PC-9 (cell line): ENCODE measurements at regions of chr2 and their contacts with region 1.

Region 1: DNA sequence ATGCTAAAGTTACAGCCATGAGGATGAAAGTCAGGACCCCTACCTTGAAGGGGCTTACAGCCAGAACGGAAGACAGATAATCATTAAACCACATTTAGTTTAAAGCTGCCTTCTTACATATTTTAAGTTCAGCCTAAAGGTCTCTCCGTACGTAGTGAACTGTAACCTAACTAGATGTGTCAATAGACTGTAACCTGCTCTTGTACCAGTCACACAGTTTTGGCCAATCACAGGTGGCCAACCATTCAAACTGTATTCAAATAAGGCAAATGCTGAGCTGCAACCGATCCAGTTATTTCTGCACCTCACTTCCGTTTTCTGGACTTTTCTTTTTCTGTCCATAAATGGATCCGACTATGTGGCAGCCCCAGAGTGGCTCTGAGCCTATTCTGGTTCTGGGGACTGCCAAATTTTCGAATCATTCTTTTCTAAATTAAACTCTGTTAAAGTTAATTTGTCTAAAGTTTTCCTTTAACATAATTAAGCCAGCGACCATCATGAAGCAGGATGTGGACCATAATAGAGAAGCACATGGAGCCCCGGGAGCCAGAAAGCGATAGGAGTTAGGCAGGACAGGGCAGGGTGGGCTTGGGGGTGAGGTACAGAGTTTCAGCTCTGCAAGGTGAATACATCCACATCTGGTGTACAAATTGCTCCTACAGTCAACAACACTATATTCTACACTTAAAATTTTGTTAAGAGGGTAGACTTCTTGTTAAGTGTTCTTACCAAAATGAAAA is 48.4 kb upstream of the YPEL5 start:
- DNase-seq: no peak
- H3K4me3 ChIP-seq: no peak overlapping the region
- H3K27ac ChIP-seq: no peak overlapping the region
- H3K4me1 ChIP-seq: no peaks in the 10 kb centered on the region
- H3K27me3 ChIP-seq: peaks cover 70% of the 10 kb centered on the region
- CTCF ChIP-seq: no peak

Region 2: GRCh38 chr2:29519338-29519925 is 579.0 kb before region 1 on chr2:
- CTCF ChIA-PET with region 1: no interaction called
- POLR2A ChIA-PET with region 1: no interaction called
- intact Hi-C with region 1: no loop called
- DNase-seq: no peak
- H3K4me3 ChIP-seq: no peak overlapping the region
- H3K27ac ChIP-seq: no peak overlapping the region
- H3K4me1 ChIP-seq: no peaks in the 10 kb centered on the region
- H3K27me3 ChIP-seq: peaks cover 63% of the 10 kb centered on the region
- CTCF ChIP-seq: no peak

Region 3: DNA sequence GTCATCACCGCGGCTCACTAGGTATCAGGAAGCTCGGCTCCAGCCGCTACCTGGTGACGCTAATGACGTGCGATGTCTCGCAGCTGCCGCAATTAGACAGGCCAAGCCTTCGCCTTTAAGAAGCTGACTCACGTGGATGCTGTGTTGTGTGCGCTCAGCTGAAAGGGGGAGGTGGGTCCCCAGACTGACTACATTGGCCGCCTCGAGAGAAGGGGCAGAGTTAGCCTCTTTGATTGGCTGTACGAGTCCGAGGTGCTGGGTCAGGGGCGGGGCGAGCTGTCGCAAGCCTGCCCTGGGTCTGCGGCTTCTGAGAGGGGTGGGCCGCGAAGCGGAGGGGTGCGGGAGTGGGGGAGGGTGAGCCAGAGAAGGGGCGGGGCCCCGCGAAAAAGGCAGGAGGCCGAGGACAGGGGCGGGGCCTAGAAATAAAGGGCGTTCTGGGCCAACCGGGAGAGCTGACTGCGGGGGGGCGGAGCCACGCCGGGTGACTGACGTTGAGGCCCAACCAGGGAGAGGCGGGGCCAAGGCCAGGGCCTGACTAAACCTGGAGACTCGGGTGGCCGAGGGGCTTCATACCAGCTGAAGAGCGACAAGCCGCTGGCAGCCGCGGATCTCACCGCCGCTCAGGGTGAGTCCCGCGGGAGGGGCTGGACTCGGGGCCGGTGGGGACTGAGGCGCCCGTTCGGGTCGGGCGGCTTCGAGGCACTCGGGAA is 48.2 kb after region 1 on chr2 and contains the start of gene YPEL5:
- CTCF ChIA-PET with region 1: no interaction called
- POLR2A ChIA-PET with region 1: no interaction called
- intact Hi-C with region 1: loop called (anchors 5 kb)
- DNase-seq: peak; percentile 99 to 100
- H3K4me3 ChIP-seq: peak within 1 kb of the TSS; percentile 83
- H3K27ac ChIP-seq: peak within 1 kb of the TSS; percentile 50
- H3K4me1 ChIP-seq: peaks cover 39% of the 10 kb centered on the region
- H3K27me3 ChIP-seq: no peaks in the 10 kb centered on the region
- CTCF ChIP-seq: no peak
- total RNA-seq, gene YPEL5: 56.9 and 67.5 TPM in 2 replicates